Tibial artery (tissue), 4 donors: ENCODE measurements at regions of chr1 and their contacts with region 1.

Region 1: GRCh38 chr1:107787299-107787698 is 177.7 kb downstream of the VAV3 start:
- DNase-seq: no peak
- H3K4me3 ChIP-seq: no peak overlapping the region
- H3K27ac ChIP-seq: no peak overlapping the region
- H3K4me1 ChIP-seq: peaks cover 0 to 9% (median 3%) of the 10 kb centered on the region in 4 donors
- H3K27me3 ChIP-seq: no peaks in the 10 kb centered on the region
- CTCF ChIP-seq: no peak

Region 2: DNA sequence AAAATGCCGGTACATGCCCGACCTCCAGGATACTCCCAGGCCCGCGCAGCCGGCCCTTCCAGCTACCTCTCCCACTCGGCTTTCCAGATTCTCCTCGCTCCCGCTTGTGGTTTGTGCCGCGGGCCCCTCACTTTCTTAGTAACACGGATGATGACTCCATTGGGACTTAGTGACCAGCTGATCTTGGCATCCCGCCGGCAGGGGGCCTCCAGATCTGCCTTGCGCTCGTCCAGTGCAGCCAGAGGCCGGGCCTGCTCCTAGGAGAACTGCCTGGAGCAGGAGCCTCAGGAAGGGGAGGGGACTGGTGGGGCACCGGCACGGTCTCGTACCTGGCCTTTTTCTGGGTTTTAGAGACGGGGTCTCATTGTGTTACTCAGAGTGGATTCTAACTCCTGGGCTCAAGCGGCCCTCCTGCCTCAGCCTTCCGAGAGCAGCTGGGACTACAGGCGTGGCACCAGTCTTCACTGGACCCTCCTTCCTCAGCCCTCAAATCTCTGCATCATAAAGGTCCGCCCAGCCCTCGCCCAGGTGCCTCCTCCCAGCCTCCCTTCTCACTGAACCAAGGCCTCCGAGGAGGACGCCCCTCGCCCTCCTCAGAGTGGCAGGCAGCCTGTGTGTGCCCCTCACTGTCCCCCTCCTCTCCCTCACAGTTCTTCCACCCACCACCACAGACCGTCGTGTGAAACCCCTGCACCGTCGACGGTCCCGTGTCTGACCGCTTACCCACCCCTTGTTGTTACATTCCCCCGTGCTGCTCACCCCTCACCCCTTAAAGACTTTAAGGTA is 334.3 kb after region 1 on chr1:
- intact Hi-C with region 1: loop called (anchors 5 kb)
- DNase-seq: no peak
- H3K4me3 ChIP-seq: no peak overlapping the region
- H3K27ac ChIP-seq: no peak overlapping the region
- H3K4me1 ChIP-seq: peaks cover 0 to 10% (median 0%) of the 10 kb centered on the region in 4 donors
- H3K27me3 ChIP-seq: peaks cover 0 to 7% of the 10 kb centered on the region in 2 donors
- CTCF ChIP-seq: no peak